Breast epithelium (tissue), 4 donors: ENCODE measurements at regions of chr4 and their contacts with region 1.

Region 1: DNA sequence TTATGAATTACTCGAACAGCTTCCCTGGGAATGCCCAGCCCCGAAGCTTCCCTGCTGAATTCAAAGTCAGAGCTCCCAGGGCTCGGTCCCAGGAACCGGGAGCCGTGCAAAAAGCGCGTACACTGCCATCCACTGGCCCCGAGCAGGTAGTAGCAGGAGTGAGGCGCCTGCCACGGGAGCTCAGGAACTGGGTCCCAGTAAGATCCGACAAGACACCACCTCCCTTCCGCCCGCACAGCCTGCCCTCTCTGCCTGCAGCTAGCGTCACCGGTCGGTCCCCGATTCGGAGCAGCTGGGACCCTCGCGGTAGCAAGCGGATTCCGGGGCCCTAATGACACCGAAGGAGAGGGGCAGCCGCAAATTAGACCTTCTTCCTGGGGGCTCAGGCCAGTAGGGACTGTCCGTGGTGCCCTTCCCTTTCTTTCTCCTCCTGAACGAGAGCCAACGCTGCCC is 1.2 kb downstream of the CORIN start:
- DNase-seq: peak; percentile 56 to 74
- H3K4me3 ChIP-seq: peak overlapping the region; percentile 42 to 71 (median 57)
- H3K27ac ChIP-seq: no peak overlapping the region
- H3K4me1 ChIP-seq: no peaks in the 10 kb centered on the region
- H3K27me3 ChIP-seq: no peaks in the 10 kb centered on the region
- CTCF ChIP-seq: peak in 2 of 3 donors; percentile 35 to 53
- POLR2A ChIP-seq: no peak

Region 2: GRCh38 chr4:47786958-47787370 is 49.7 kb before region 1 on chr4:
- intact Hi-C with region 1: no loop called
- DNase-seq: no peak
- H3K4me3 ChIP-seq: no peak overlapping the region
- H3K27ac ChIP-seq: no peak overlapping the region
- H3K4me1 ChIP-seq: no peaks in the 10 kb centered on the region
- H3K27me3 ChIP-seq: no peaks in the 10 kb centered on the region
- CTCF ChIP-seq: no peak
- POLR2A ChIP-seq: no peak

Region 3: GRCh38 chr4:47814618-47815295 is 21.9 kb before region 1 on chr4:
- intact Hi-C with region 1: loop called (anchors 1 kb)
- DNase-seq: no peak
- H3K4me3 ChIP-seq: no peak overlapping the region
- H3K27ac ChIP-seq: no peak overlapping the region
- H3K4me1 ChIP-seq: no peaks in the 10 kb centered on the region
- H3K27me3 ChIP-seq: no peaks in the 10 kb centered on the region
- CTCF ChIP-seq: no peak
- POLR2A ChIP-seq: no peak

Region 4: GRCh38 chr4:47852136-47852535 is 15.5 kb after region 1 on chr4:
- intact Hi-C with region 1: no loop called
- DNase-seq: peak in 1 of 2 donors; percentile 30
- H3K4me3 ChIP-seq: no peak overlapping the region
- H3K27ac ChIP-seq: no peak overlapping the region
- H3K4me1 ChIP-seq: no peaks in the 10 kb centered on the region
- H3K27me3 ChIP-seq: no peaks in the 10 kb centered on the region
- CTCF ChIP-seq: no peak
- POLR2A ChIP-seq: no peak